Dendritic cell treated with granulocyte-macrophage colony-stimulating factor and Interleukin-4, amounts not matched to agents 40 ng/mL and 50 ng/mL, for 4 days (primary cell): ENCODE measurements at regions of chr1 and their contacts with region 1.

Region 1: DNA sequence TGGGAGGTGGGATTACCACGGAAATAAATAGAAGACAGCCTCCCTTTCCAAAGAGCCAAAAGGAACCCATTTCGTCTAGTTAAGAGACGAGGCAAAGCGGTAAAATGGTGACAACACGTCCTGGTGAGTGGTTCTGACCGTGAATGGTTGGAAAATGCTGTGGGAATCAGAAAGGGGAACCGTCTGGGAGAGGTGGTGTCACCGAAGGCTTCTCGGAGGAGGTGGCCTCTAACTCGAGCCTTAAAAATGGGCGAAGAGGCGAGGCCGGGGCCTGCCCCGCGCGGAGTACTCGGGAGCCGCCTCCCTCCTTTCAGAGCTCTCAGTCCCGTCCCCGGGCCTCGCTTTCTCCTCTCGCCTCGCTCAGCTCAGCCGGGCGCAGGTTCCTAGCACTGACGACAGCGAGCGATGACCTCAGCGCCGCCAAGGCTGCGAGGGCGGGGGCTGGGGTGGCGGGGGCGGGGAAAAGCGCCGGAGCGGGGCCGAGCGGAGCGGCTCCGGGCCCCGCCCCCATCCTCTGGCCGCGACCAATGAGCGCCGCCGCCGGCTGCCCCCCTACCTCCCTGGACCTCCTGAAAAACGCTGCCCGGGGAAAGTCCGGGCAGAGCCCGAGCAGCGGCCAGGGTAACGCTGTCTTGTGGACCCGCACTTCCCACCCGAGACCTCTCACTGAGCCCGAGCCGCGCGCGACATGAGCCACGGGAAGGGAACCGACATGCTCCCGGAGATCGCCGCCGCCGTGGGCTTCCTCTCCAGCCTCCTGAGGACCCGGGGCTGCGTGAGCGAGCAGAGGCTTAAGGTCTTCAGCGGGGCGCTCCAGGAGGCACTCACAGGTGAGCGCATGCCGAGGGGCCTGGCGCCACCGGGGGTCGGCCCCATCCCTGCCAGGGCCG is at the start of gene BTG2:
- H3K4me3 Mint-ChIP-seq: peak within 1 kb of the TSS; percentile 97
- H3K27ac Mint-ChIP-seq: peak within 1 kb of the TSS; percentile 96
- H3K4me1 Mint-ChIP-seq: peaks cover 67% of the 10 kb centered on the region
- H3K27me3 Mint-ChIP-seq: no peaks in the 10 kb centered on the region

Region 2: DNA sequence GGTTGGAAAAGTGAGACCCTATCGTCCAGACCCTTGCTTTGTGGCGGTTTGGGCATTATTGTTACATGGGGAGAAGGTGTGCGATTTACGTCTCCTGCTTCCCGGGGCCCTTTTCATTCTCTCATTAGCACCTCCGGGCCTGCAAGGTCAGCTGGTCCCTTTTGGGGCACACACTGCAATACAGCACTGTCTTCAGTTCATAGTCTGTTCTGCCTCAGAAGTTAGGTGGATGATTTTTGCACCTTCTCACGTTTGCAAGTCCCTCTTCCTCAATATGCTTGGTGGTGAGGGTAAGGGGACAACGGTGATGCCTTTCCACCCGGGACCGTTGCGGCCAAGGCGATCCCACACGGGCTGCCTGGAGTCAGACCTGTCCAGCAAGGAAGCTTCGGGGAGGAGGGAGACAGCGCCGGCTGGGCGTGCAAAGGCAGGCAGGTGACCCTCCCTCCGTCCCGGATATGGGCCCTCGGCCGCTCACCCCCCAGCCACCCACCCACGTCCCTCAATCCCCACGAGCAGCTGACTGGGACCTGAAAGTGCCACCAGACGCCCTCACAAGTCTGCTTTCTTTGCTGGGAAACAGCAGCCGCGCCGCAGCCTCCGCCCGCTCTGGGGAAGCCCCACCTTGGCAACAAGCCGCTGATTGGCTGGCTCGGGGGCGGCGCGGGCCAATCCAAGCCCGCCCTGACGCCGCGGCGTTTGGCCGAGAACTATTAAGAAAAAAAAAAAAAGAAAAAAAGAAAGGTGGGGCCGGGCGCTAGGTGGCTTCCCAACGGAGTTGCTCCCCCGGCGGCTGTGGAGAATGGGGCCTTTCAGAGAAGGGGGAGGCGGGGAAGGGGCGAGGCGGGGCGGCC is 21.9 kb after region 1 on chr1:
- intact Hi-C with region 1: loop called (anchors 1 kb)
- H3K4me3 Mint-ChIP-seq: peak overlapping the region; percentile 71
- H3K27ac Mint-ChIP-seq: peak overlapping the region; percentile 95
- H3K4me1 Mint-ChIP-seq: peaks cover 81% of the 10 kb centered on the region
- H3K27me3 Mint-ChIP-seq: no peaks in the 10 kb centered on the region